ENCODE measurements at regions of chr20 and their contacts with region 1.

Region 1: DNA sequence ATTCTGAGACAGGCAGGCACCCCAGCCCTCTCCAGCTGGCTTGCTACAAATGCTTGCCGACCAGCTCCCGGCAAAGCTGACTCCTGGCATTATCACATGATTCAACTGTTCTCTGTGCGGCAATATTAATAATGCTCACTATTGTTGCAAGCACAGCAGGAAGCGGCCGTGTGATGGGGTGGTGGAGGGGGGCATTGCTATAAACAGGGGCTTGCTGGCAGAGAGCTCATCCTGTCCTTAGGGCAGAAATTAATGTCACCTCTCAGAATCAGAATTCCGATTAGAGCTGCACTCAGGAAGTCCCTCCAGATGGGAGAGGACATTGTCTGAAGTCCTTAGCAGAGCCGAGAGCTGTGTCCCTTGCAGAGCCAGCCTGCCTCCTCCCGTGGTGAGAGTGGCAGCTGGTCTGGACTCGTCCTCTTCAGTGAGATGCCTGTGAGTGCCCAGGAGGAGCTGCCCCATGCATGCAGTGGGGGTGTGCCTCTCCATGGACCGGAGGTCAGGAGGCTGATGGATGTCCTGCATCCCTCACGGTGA is 162.5 kb downstream of the CDH4 start:
- DNase-seq: peak in 4 of 10 donors; percentile 56 to 70 (median 63)
- H3K4me3 ChIP-seq: peak overlapping the region in 18 of 59 donors; percentile 3 to 45 (median 26)
- H3K27ac ChIP-seq: peak overlapping the region in 48 of 59 donors; percentile 20 to 98 (median 81)
- H3K27me3 ChIP-seq: no peaks in the 10 kb centered on the region
- CTCF ChIP-seq: peak in 4 of 56 donors; percentile 8 to 15 (median 13)

Region 2: DNA sequence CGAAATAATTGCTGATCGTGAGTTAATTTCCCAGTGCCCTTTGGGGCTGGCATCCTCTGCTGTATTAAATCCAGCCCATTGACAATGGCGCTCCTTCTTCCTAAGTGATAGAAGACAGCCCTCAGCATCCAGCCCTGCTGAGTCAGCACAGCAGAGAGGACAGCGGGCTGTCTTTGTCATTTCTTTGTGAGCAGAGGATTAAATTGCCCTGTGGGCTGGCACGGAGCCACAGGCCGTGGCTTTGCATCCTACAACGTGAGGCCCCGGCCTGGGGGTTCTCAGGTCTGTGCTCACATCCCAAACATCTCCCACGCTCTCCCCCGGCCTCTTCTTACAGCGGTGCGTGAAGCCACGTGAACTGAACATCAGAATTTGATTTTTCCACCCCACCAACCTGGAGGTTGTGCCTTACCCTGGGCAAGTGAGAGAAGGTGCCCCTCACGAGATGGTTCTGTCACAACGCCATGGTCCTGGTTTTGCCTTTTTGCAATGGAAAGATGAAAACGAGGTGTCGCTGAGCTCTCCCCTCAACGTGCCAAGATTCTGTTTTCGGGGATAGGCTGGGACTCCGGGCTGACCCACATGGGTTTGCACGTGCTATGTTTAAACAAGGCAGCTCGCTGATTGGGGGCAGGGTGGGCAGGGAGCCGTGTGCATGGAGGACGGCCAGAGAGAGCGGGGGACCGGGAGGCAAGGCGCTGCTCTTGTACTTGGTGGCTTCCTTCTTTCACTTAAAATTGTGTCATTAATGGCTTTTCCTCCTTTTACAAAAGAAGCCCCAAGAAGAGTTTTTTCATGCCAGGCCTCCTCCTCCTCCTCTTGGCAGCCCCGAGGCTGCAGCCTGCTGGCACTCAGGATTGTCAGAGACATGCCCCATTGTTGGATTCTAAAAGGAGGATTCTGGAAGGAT is 143.0 kb before region 1 on chr20:
- intact Hi-C with region 1: loop called in 1 of 2 experiments (anchors 5 kb)
- DNase-seq: peak in 6 of 10 donors; percentile 52 to 64 (median 62)
- H3K4me3 ChIP-seq: peak overlapping the region in 55 of 59 donors; percentile 9 to 63 (median 36)
- H3K27ac ChIP-seq: peak overlapping the region in 47 of 59 donors; percentile 14 to 87 (median 63)
- H3K27me3 ChIP-seq: peaks cover 0 to 2% (median 0%) of the 10 kb centered on the region in 45 donors
- CTCF ChIP-seq: peak in 2 of 56 donors; percentile 12 to 28

Region 3: DNA sequence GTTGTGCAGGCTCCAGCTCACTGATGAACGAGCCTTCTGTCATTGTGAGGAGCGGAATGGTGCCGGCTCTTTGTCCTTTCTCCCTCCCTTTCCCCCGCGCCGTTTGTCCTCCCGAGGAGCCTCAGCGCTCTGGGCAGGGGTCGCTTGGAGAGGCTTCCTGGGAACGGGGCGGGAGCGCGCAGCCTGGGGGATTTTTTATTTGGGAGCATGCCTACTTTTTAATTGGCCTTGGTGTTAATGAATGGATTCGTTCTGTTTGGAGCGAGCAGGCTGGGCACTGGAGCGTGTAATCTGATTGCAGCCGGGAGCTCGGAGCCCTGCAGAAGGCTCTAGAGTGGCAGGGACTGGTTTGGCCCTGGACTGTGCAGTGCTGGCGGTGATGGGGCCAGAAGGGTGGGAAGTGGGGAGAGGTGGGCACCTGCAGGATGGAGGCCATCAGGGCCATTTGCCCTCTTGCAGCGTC is 43.7 kb before region 1 on chr20:
- intact Hi-C with region 1: loop called in 1 of 2 experiments (anchors 5 kb)
- DNase-seq: peak in 5 of 10 donors; percentile 29 to 70 (median 31)
- H3K4me3 ChIP-seq: peak overlapping the region in 28 of 59 donors; percentile 4 to 56 (median 36)
- H3K27ac ChIP-seq: peak overlapping the region in 34 of 59 donors; percentile 4 to 79 (median 52)
- H3K27me3 ChIP-seq: no peaks in the 10 kb centered on the region
- CTCF ChIP-seq: peak in 1 of 56 donors; percentile 26

Region 4: DNA sequence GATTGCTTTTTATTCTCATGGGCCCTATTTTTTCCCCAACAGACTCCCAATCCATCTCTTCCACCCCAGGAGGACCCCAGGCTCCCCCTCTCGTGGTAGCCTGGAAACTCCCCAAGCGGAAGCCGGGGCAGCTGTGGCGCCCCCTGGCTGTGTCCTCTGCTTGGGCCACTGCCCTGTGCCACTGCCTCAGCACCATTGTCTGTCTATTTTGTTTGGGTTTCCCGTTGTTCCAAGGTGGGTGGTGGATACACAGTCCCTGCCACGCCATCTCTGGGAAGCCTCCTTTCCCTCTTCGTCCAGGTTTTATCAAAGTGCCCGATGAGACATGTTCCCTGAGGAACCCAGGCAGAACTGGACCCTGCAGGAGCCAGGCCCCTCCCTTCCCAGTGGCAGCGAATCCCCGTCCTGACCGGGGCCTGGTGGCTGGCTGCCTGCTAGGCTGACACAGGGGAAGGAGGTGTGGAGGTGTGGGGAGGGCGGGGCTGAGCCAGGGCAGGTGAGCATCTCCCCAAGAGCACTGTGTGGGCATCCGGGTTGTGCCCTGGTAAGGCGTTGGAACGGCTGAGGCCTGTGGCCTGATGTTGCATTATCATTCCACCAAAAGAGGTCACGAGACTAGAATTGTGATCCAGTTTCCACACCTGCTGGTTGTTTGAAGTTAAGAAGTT is 65.8 kb after region 1 on chr20:
- intact Hi-C with region 1: no loop called
- DNase-seq: no peak
- H3K4me3 ChIP-seq: no peak overlapping the region
- H3K27ac ChIP-seq: no peak overlapping the region
- H3K27me3 ChIP-seq: peaks cover 0 to 4% (median 0%) of the 10 kb centered on the region in 45 donors
- CTCF ChIP-seq: peak in 1 of 56 donors; percentile 20

Region 5: DNA sequence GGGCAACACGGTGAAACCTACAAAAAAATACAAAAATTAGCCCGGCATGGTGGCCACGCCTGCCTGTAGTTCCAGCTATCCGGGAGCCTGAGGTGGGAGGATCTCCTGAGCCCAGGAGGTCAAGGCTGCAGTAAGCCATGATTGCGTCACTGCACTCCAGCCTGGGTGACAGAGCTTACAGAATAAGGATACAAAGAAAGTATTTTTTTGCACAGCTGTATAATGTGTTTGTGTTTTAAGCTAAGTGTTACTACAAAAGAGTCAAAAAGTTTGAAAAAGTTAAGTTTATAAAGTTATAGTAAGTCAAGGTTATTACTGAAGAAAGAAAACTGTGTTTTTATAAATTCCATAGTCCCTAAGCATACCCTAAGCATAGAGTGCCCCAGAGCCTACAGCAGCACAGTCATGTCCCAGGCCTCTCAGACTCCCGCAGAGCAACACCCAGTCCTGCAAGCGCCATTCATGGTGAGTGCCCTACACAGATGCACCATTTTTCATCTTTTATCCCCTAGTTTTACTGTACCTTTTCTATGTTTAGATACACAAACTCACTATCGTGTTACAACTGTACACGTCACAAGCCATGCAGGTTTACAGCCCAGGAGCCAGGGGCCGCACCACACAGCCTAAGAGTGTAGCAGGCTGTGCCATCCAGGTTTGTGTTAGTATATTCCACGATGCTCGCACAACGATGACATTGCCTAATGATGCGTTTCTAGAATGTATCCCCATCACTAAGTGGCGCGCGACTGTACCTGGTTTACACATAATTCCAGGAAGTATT is 628.8 kb after region 1 on chr20:
- intact Hi-C with region 1: no loop called
- DNase-seq: peak in 1 of 10 donors; percentile 15
- H3K4me3 ChIP-seq: no peak overlapping the region
- H3K27ac ChIP-seq: no peak overlapping the region
- H3K27me3 ChIP-seq: no peaks in the 10 kb centered on the region
- CTCF ChIP-seq: no peak

Measured in dorsolateral prefrontal cortex (tissue), 120 donors.